Breast epithelium (tissue), 4 donors: ENCODE measurements at regions of chr5 and their contacts with region 1.

Region 1: DNA sequence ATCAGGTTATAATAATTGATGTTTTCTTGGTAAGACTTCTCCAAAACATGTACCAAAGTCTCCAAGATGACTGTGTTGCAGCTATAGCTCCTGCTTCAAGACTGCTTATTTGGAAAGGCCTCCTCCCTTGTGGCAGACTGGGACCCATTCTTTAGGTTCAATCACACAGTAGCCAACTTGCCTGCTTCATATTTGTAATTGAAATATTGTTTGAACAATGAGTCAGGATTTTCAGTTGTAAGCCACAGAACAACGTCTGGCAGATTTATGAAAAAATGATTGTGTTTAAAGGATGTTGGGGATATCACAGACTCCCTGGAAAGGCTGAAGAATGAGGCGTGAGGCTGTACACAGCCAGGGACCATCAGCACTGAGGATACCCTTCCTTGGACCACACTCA is 458.9 kb downstream of the MED10 start:
- DNase-seq: no peak
- H3K4me3 ChIP-seq: no peak overlapping the region
- H3K27ac ChIP-seq: no peak overlapping the region
- H3K4me1 ChIP-seq: no peaks in the 10 kb centered on the region
- H3K27me3 ChIP-seq: no peaks in the 10 kb centered on the region
- CTCF ChIP-seq: no peak
- POLR2A ChIP-seq: no peak

Region 2: GRCh38 chr5:4442221-4442620 is 1477.2 kb before region 1 on chr5:
- intact Hi-C with region 1: no loop called
- DNase-seq: no peak
- H3K4me3 ChIP-seq: no peak overlapping the region
- H3K27ac ChIP-seq: no peak overlapping the region
- H3K4me1 ChIP-seq: no peaks in the 10 kb centered on the region
- H3K27me3 ChIP-seq: no peaks in the 10 kb centered on the region
- CTCF ChIP-seq: no peak
- POLR2A ChIP-seq: no peak

Region 3: GRCh38 chr5:5905186-5905585 is 14.2 kb before region 1 on chr5:
- intact Hi-C with region 1: loop called (anchors 1 kb)
- DNase-seq: no peak
- H3K4me3 ChIP-seq: no peak overlapping the region
- H3K27ac ChIP-seq: no peak overlapping the region
- H3K4me1 ChIP-seq: no peaks in the 10 kb centered on the region
- H3K27me3 ChIP-seq: no peaks in the 10 kb centered on the region
- CTCF ChIP-seq: no peak
- POLR2A ChIP-seq: no peak